AG04449 (cell line): ENCODE measurements at regions of chr17 and their contacts with region 1.

Region 1: GRCh38 chr17:9768381-9768934 is 22.9 kb downstream of the DHRS7C start:
- DNase-seq: no peak
- H3K4me3 ChIP-seq: no peak overlapping the region
- CTCF ChIP-seq: no peak

Region 2: DNA sequence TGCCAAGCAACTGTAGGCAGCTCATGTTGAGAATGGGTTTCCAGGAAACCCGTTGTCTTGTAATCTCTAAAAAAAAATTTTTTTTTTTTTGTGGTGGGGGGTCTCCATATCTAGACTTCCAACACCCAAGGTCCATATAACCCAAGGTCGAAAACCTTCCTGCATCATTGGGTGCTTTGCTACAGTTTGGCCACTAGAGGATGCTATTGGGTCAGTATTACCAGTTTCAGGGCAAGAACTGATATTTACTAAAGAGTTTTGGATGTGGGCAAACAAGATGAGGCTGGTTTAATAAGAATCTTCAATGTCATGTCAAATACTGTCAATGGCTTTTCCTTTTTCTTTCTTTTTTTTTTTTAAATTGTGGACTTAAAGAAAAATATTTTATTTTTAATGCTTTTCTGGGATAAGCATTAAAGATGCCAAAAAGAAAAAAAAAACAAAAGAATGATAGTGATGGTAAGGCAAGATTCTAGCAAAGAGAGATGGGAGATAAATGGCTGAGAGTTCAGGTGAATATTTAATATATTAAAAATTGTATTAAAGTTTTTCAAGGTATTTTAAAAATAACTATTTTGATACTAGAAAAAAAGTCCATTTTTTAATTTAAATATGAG is 39.3 kb before region 1 on chr17:
- CTCF ChIA-PET with region 1: interaction called, 12 read pairs
- POLR2A ChIA-PET with region 1: no interaction called
- DNase-seq: peak; percentile 0
- H3K4me3 ChIP-seq: no peak overlapping the region
- CTCF ChIP-seq: peak; percentile 85